Breast epithelium (tissue), 4 donors: ENCODE measurements at regions of chr1 and their contacts with region 1.

Region 1: DNA sequence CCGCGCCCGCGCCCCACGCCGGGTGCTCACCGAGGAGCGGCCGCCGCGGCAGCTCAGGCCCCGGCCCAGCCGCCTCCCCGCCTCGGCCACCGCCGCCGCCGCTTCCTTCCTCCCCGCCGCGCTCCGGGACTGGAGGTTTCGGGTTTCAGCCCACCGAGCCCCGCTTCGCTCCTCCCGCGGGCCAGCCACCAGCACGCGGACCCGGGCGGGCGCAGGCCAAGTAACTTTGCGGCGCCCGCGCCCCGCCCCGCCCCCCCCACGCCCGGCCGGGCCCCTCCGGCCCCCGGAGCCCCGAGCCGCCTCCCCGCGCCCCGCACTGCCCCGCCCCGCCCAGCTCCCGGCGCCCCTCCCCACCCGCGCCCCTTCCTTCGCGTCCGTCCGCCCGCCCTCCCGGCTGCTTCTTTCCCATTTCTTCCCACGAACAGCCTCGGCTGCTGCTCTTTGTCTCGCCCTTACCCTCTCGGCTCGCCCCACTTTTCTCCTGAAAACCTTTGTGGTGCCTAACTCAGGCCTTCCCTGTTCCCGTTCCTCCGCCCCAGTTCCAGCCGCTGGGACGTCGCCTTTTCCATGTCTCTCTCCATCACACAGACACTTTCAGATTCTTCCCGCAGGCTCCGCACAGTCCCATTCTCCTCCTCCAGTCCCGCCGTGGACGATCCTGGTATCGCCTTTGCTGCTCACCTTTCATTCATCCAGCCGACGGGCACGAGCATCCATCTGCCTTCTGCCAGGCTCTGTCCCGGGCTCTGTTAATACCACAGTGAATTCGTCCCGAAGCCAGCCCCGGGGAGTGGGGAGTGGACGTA is at the start of gene GPR161:
- DNase-seq: no peak
- H3K4me3 ChIP-seq: peak within 1 kb of the TSS; percentile 65 to 80 (median 79)
- H3K27ac ChIP-seq: peak within 1 kb of the TSS; percentile 62 to 83
- H3K4me1 ChIP-seq: no peaks in the 10 kb centered on the region
- H3K27me3 ChIP-seq: no peaks in the 10 kb centered on the region
- CTCF ChIP-seq: no peak
- POLR2A ChIP-seq: no peak
- total RNA-seq, gene GPR161: 2.8 to 5.6 (median 4.5) TPM

Region 2: DNA sequence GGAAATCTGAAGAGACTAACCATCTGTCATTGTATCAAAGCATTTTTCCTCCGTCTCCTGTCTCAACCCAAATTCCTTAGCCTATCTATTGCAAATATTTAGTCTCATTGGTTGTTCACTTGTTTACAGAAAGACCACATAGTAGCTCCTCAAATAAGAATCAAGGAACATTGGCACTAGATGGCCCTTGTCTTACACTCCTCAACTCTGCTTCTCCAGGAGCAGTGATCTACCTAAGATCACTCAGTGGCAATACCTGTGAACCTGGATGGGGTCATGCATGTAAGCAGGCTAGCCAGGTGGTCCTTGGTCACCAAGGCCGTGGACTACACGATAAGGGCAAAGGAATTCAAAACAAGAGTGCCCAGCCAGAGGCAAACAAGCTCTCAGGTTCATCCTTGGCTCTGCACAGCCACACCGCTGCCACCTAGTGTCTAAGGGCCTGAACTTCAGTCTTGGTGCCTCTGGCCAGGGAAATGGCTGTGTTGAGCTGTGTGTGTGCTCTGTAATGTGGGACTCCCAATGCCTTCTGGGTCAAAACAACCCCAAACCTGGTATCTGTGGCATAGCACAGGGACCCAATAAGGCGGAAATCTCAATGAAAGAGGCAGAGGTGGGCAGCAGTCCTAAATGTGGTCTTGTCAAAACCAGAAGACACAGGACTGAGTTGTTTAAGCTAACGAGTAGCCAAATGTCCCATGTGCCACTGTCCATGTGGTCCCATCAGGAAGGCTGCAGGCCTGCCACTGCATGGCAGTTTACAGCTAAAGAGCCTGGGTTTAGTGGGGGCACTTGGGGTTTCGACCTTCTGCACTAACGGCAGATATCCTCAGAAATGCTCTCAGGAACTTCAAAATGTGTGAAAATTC is 54.7 kb before region 1 on chr1:
- intact Hi-C with region 1: no loop called
- DNase-seq: peak; percentile 39 to 73
- H3K4me3 ChIP-seq: no peak overlapping the region
- H3K27ac ChIP-seq: peak overlapping the region in 1 of 2 donors; percentile 79
- H3K4me1 ChIP-seq: no peaks in the 10 kb centered on the region
- H3K27me3 ChIP-seq: no peaks in the 10 kb centered on the region
- CTCF ChIP-seq: peak; percentile 48 to 71 (median 61)
- POLR2A ChIP-seq: no peak

Region 3: DNA sequence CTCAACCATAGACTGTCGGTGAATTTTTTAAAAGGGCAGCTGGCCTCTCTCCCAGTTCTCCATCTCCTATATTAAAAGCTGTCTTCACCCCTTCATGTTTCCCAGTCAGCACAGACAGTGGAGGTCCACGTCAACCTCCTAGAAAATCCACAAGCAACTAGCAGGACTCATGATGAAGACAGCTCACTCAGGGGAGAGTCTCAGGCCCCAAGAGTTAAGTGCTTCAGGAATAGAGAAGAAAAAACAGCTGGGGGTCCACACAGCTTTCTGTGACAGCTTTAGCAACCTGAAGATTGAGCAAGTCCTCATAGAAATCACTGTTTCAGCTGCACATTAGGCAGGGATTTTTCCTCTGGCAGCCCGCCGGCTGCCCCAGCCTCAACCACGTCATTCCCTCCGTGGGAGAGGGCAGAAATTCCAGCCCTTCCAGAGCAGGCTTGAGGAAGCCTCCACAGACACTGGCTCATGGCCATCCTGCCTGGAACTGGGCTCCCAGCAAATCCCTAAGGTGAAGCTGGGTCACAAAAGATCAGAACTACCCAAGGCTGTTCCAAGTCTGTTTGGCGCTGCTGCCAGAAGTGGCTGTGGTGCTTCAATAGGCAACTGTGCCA is 15.4 kb before region 1 on chr1:
- intact Hi-C with region 1: loop called (anchors 2 kb)
- DNase-seq: peak in 1 of 2 donors; percentile 55
- H3K4me3 ChIP-seq: no peak overlapping the region
- H3K27ac ChIP-seq: peak overlapping the region; percentile 54 to 70
- H3K4me1 ChIP-seq: no peaks in the 10 kb centered on the region
- H3K27me3 ChIP-seq: no peaks in the 10 kb centered on the region
- CTCF ChIP-seq: no peak
- POLR2A ChIP-seq: no peak